H1 (cell line): ENCODE measurements at regions of chr15 and their contacts with region 1.

Region 1: DNA sequence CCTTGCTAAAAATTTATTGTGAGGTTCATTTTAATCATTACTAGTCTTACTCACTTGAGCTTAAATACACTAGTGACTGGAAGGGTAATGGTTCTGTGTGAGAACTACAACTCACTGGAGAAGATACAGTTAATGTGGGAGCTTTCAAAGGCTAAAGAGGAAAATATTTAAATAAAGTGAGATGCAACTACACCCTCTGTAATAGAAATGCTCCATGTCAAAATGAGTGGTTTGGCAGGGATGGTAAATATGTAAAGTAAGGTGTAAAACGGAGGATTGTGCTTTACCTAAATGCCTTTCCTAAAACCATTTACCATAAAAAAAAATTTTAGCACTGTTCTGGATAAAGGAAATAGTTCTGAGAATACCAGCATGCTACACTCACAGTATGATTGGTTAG is 15.3 kb downstream of the LRRC57 start:
- DNase-seq: no peak
- H3K4me3 ChIP-seq: no peak overlapping the region
- H3K27ac ChIP-seq: no peak overlapping the region
- H3K4me1 ChIP-seq: no peaks in the 10 kb centered on the region
- H3K27me3 ChIP-seq: no peaks in the 10 kb centered on the region
- CTCF ChIP-seq: no peak
- EP300 ChIP-seq: no peak
- POLR2A ChIP-seq: no peak
- RAD21 ChIP-seq: no peak

Region 2: DNA sequence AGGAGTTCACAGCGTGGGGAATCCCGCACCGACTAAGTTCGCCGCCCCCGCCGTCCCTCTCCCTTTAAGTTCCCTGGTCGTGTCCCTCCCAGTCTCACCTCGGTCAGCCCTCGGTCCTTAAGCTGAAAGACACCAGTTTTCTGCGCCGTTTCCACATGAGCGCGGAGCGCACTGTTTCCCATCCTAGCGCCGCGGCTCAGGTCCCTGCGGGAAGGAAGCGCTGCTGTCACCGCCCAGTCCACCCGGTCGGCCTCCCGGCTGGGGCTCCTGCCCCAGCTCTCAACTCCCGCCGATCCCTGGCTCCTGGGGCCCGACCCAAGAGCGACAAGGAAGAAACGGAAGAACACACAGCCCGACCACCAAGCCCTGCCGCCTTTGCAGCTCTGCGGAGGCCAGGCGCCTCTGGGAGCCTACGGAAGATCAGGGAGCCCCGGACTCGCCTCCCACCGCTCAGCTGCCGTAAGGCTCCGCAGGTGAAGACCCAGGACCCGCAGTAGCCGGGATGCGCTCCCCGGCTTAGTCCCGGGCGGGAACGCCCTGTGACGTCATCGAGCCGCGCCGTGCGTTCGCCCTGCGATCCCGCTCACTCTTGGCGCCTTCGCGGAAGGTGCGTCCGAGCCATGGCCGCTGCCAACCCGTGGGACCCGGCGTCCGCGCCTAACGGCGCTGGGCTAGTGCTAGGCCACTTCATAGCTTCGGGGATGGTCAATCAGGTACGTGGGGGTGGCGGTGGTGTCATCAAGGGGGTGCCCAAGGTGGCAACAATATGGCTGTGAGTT is 15.2 kb after region 1 on chr15 and contains the starts of genes HAUS2 and LRRC57:
- CTCF ChIA-PET with region 1: interaction called, 4 read pairs
- POLR2A ChIA-PET with region 1: interaction called, 11 read pairs
- DNase-seq: peak; percentile 59 to 98
- H3K4me3 ChIP-seq: peak within 1 kb of the TSS; percentile 92 to 97 (median 96)
- H3K27ac ChIP-seq: peak within 1 kb of the TSS; percentile 97
- H3K4me1 ChIP-seq: peaks cover 0 to 3% (median 0%) of the 10 kb centered on the region in 4 experiments; a peak in 2 of 7 replicates
- H3K27me3 ChIP-seq: no peaks in the 10 kb centered on the region
- CTCF ChIP-seq: no peak
- EP300 ChIP-seq: no peak
- POLR2A ChIP-seq: peak; percentile 87 to 93; a peak in 2 of 3 replicates
- RAD21 ChIP-seq: no peak
- total RNA-seq, gene HAUS2: 28.8 and 33.5 TPM in 2 replicates
- total RNA-seq, gene LRRC57: 11.1 and 12.7 TPM in 2 replicates